Heart right ventricle (tissue), 16 donors: ENCODE measurements at regions of chr4 and their contacts with region 1.

Region 1: GRCh38 chr4:74675673-74676279 is 118.5 kb downstream of the BTC start:
- DNase-seq: peak in 1 of 2 donors; percentile 14
- ATAC-seq: no peak
- H3K4me3 ChIP-seq: no peak overlapping the region
- H3K27ac ChIP-seq: no peak overlapping the region
- H3K4me1 ChIP-seq: peaks cover 0 to 5% (median 0%) of the 10 kb centered on the region in 9 donors
- H3K27me3 ChIP-seq: peaks cover 0 to 13% (median 0%) of the 10 kb centered on the region in 7 donors
- CTCF ChIP-seq: peak; percentile 16 to 77 (median 71)

Region 2: GRCh38 chr4:73952352-73952751 is 723.4 kb before region 1 on chr4:
- intact Hi-C with region 1: no loop called
- DNase-seq: no peak
- ATAC-seq: no peak
- H3K4me3 ChIP-seq: no peak overlapping the region
- H3K27ac ChIP-seq: no peak overlapping the region
- H3K4me1 ChIP-seq: peaks cover 0 to 2% (median 0%) of the 10 kb centered on the region in 9 donors
- H3K27me3 ChIP-seq: peaks cover 0 to 1% (median 0%) of the 10 kb centered on the region in 7 donors
- CTCF ChIP-seq: no peak

Region 3: GRCh38 chr4:74311696-74312313 is 364.0 kb before region 1 on chr4:
- intact Hi-C with region 1: loop called in 1 of 10 experiments (anchors 10 kb)
- DNase-seq: peak in 1 of 2 donors; percentile 36
- ATAC-seq: peak in 1 of 8 donors; percentile 42
- H3K4me3 ChIP-seq: no peak overlapping the region
- H3K27ac ChIP-seq: no peak overlapping the region
- H3K4me1 ChIP-seq: no peaks in the 10 kb centered on the region
- H3K27me3 ChIP-seq: no peaks in the 10 kb centered on the region
- CTCF ChIP-seq: peak; percentile 16 to 76 (median 68)

Region 4: GRCh38 chr4:74370912-74371311 is 304.9 kb before region 1 on chr4:
- intact Hi-C with region 1: loop called in 9 of 10 experiments (anchors 2 to 10 kb)
- DNase-seq: no peak
- ATAC-seq: peak in 3 of 8 donors; percentile 54 to 77 (median 66)
- H3K4me3 ChIP-seq: no peak overlapping the region
- H3K27ac ChIP-seq: no peak overlapping the region
- H3K4me1 ChIP-seq: peaks cover 0 to 3% (median under 1%) of the 10 kb centered on the region in 9 donors
- H3K27me3 ChIP-seq: peaks cover 0 to 36% (median 11%) of the 10 kb centered on the region in 7 donors
- CTCF ChIP-seq: peak in 8 of 9 donors; percentile 16 to 66 (median 58)

Region 5: GRCh38 chr4:74531963-74532794 is 143.6 kb before region 1 on chr4:
- intact Hi-C with region 1: loop called in 3 of 10 experiments (anchors 10 kb)
- DNase-seq: no peak
- ATAC-seq: peak in 5 of 8 donors; percentile 40 to 72 (median 68)
- H3K4me3 ChIP-seq: no peak overlapping the region
- H3K27ac ChIP-seq: no peak overlapping the region
- H3K4me1 ChIP-seq: peaks cover 0 to 21% (median 7%) of the 10 kb centered on the region in 9 donors
- H3K27me3 ChIP-seq: peaks cover 0 to 5% (median 0%) of the 10 kb centered on the region in 7 donors
- CTCF ChIP-seq: peak; percentile 9 to 72 (median 60)

Region 6: GRCh38 chr4:74598611-74599290 is 77.0 kb before region 1 on chr4:
- intact Hi-C with region 1: no loop called
- DNase-seq: no peak
- ATAC-seq: no peak
- H3K4me3 ChIP-seq: no peak overlapping the region
- H3K27ac ChIP-seq: no peak overlapping the region
- H3K4me1 ChIP-seq: no peaks in the 10 kb centered on the region
- H3K27me3 ChIP-seq: no peaks in the 10 kb centered on the region
- CTCF ChIP-seq: no peak